ENCODE measurements at regions of chr10 and their contacts with region 1.

Region 1: GRCh38 chr10:97686962-97687784 is at the start of gene AVPI1:
- DNase-seq: peak; percentile 98
- ATAC-seq: peak; percentile 94
- H3K4me3 ChIP-seq: peak within 1 kb of the TSS; percentile 34 to 80 (median 76)
- H3K4me3 Mint-ChIP-seq: peak within 1 kb of the TSS; percentile 90
- H3K27ac ChIP-seq: peak within 1 kb of the TSS; percentile 71 to 73
- H3K27ac Mint-ChIP-seq: peak within 1 kb of the TSS; percentile 79
- H3K4me1 ChIP-seq: peaks cover 4 to 15% of the 10 kb centered on the region in 2 donors
- H3K4me1 Mint-ChIP-seq: peaks cover 14% of the 10 kb centered on the region
- H3K27me3 ChIP-seq: peaks cover 0 to 5% (median 0%) of the 10 kb centered on the region in 4 experiments
- H3K27me3 Mint-ChIP-seq: no peaks in the 10 kb centered on the region
- CTCF ChIP-seq: no peak
- total RNA-seq, gene AVPI1: 3.4 and 3.9 TPM in 2 replicates

Region 2: DNA sequence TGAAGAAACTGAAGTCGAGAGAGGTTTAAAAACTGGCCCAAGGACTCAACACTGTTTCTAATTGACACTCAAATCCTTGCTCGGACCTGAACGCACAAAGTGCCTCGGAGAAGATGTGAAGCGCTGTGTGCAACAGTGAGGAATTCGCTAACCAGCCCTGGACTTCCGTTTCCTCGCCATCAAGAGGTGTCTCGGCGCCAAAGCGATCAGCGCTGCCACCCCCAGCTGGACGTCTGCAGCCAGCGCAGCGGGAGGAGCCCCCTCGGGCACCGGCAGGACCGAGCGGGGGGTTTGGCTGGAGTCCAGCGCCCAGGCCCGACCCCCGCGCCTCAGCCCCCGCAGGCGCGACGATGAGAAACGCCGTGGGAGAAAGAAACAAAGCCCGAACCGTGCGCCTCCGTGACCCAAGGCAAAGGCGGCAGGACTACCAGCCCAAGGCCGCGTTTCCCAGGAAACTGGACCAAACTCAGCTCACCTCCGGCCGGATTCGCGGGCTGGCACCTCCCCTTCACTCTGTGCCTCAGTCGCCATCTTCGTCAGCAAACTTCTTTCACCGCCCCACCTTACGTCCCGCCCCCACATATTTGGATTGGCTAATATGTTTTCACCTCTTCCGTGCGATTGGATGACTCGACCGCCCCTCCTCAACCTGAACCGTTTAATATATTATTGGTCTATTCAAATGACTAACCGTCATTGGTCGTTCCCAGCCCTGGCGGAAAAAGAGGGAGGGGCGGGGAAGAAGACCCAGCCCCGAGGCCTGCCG is 394.9 kb before region 1 on chr10 and contains the start of gene ARHGAP19:
- CTCF ChIA-PET with region 1: no interaction called
- POLR2A ChIA-PET with region 1: no interaction called
- intact Hi-C with region 1: no loop called
- DNase-seq: peak; percentile 96
- ATAC-seq: peak; percentile 98
- H3K4me3 ChIP-seq: peak within 1 kb of the TSS; percentile 63 to 98 (median 91)
- H3K4me3 Mint-ChIP-seq: peak within 1 kb of the TSS; percentile 90
- H3K27ac ChIP-seq: peak within 1 kb of the TSS; percentile 48 to 85
- H3K27ac Mint-ChIP-seq: peak within 1 kb of the TSS; percentile 86
- H3K4me1 ChIP-seq: peaks cover 6 to 12% of the 10 kb centered on the region in 2 donors
- H3K4me1 Mint-ChIP-seq: peaks cover 16% of the 10 kb centered on the region
- H3K27me3 ChIP-seq: no peaks in the 10 kb centered on the region
- H3K27me3 Mint-ChIP-seq: no peaks in the 10 kb centered on the region
- CTCF ChIP-seq: no peak
- total RNA-seq, gene ARHGAP19: 21.7 and 22.5 TPM in 2 replicates

Region 3: DNA sequence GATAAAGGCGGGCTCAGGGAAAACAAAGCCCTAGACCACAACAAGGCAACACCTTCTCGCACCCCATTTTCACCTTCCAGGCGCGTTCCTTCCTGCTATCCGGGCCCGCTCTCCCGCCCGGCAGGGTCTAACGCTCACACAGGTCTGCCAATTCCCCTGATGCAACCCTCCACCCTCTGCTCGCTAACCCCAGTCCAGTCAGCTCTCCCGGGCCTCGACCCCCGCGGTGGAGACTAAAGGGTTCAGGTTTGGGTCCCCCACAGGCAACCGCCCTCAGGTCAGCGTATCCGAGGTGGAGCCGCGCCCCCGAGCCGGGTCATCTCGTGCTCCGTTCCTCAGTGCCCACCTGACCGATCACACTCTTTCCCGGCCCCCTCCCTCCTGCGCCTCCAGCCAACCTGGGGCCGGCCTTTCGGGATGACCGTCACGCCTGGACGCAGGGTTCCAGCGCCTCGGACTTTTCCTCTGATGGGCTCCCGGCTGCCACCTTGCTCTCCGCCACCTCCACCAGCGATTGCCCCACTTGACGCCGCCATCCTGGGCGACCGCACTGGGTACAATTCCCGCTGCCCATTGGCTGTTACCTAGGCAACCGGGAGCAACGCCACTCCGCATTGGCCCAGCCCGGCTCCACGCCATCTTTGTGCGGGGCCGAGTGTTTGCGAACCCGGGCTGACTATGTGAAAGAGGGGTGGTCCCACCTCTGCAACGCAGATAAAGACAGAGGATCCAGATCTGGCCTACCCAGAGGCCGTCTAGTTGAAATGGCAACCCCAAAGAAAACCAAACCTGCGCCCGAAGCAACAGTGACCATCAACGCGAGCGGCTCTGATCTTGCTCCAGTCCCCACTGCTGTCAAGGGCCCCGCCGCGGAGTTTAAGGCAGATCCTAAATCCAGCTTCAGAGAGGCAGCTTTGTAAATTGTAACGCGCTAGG is 54.0 kb before region 1 on chr10 and contains the start of gene MORN4:
- CTCF ChIA-PET with region 1: no interaction called
- POLR2A ChIA-PET with region 1: no interaction called
- intact Hi-C with region 1: loop called (anchors 2 kb)
- DNase-seq: peak; percentile 93
- ATAC-seq: peak; percentile 99
- H3K4me3 ChIP-seq: peak within 1 kb of the TSS; percentile 34 to 87 (median 63)
- H3K4me3 Mint-ChIP-seq: peak within 1 kb of the TSS; percentile 94
- H3K27ac ChIP-seq: peak within 1 kb of the TSS in 1 of 2 donors; percentile 11
- H3K27ac Mint-ChIP-seq: peak within 1 kb of the TSS; percentile 76
- H3K4me1 ChIP-seq: peaks cover 0 to 11% of the 10 kb centered on the region in 2 donors
- H3K4me1 Mint-ChIP-seq: peaks cover 13% of the 10 kb centered on the region
- H3K27me3 ChIP-seq: peaks cover 0 to 6% (median 0%) of the 10 kb centered on the region in 4 experiments
- H3K27me3 Mint-ChIP-seq: no peaks in the 10 kb centered on the region
- CTCF ChIP-seq: no peak
- total RNA-seq, gene MORN4: 2.8 TPM in 2 replicates

Region 4: GRCh38 chr10:97676770-97677581 is 10.2 kb before region 1 on chr10:
- CTCF ChIA-PET with region 1: interaction called, 56 read pairs
- POLR2A ChIA-PET with region 1: no interaction called
- intact Hi-C with region 1: loop called (anchors 1 kb)
- DNase-seq: peak; percentile 77
- ATAC-seq: peak; percentile 92
- H3K4me3 ChIP-seq: no peak overlapping the region
- H3K4me3 Mint-ChIP-seq: peak overlapping the region; percentile 27
- H3K27ac ChIP-seq: peak overlapping the region; percentile 35 to 51
- H3K27ac Mint-ChIP-seq: peak overlapping the region; percentile 67
- H3K4me1 ChIP-seq: peaks cover 9 to 12% of the 10 kb centered on the region in 2 donors
- H3K4me1 Mint-ChIP-seq: peaks cover 13% of the 10 kb centered on the region
- H3K27me3 ChIP-seq: no peaks in the 10 kb centered on the region
- H3K27me3 Mint-ChIP-seq: no peaks in the 10 kb centered on the region
- CTCF ChIP-seq: peak; percentile 94

Region 5: GRCh38 chr10:97714048-97714371 is 26.8 kb after region 1 on chr10:
- CTCF ChIA-PET with region 1: interaction called, 7 read pairs
- POLR2A ChIA-PET with region 1: interaction called, 3 read pairs
- intact Hi-C with region 1: loop called (anchors 1 kb)
- DNase-seq: peak; percentile 82
- ATAC-seq: peak; percentile 84
- H3K4me3 ChIP-seq: peak overlapping the region; percentile 4 to 67 (median 58)
- H3K4me3 Mint-ChIP-seq: peak overlapping the region; percentile 100
- H3K27ac ChIP-seq: no peak overlapping the region
- H3K27ac Mint-ChIP-seq: peak overlapping the region; percentile 91
- H3K4me1 ChIP-seq: peaks cover 12 to 18% of the 10 kb centered on the region in 2 donors
- H3K4me1 Mint-ChIP-seq: peaks cover 20% of the 10 kb centered on the region
- H3K27me3 ChIP-seq: peaks cover 0 to 37% (median 16%) of the 10 kb centered on the region in 4 experiments
- H3K27me3 Mint-ChIP-seq: peaks cover 27% of the 10 kb centered on the region
- CTCF ChIP-seq: no peak

Region 6: GRCh38 chr10:97736902-97737769 is 50.0 kb after region 1 on chr10 and contains the start of gene ZFYVE27:
- CTCF ChIA-PET with region 1: interaction called, 267 read pairs
- POLR2A ChIA-PET with region 1: interaction called, 17 read pairs
- intact Hi-C with region 1: loop called (anchors 1 kb)
- DNase-seq: peak; percentile 98
- ATAC-seq: peak; percentile 92
- H3K4me3 ChIP-seq: peak within 1 kb of the TSS; percentile 46 to 97 (median 77)
- H3K4me3 Mint-ChIP-seq: peak within 1 kb of the TSS; percentile 100
- H3K27ac ChIP-seq: peak within 1 kb of the TSS; percentile 92 to 97
- H3K27ac Mint-ChIP-seq: peak within 1 kb of the TSS; percentile 100
- H3K4me1 ChIP-seq: peaks cover 25 to 39% of the 10 kb centered on the region in 2 donors
- H3K4me1 Mint-ChIP-seq: peaks cover 55% of the 10 kb centered on the region
- H3K27me3 ChIP-seq: no peaks in the 10 kb centered on the region
- H3K27me3 Mint-ChIP-seq: no peaks in the 10 kb centered on the region
- CTCF ChIP-seq: no peak
- total RNA-seq, gene ZFYVE27: 79.0 and 79.7 TPM in 2 replicates